PC-3 (cell line): ENCODE measurements at regions of chr17 and their contacts with region 1.

Region 1: GRCh38 chr17:44344939-44345453 is at the start of gene GRN:
- DNase-seq: peak; percentile 99
- ATAC-seq: peak; percentile 97
- H3K4me3 ChIP-seq: peak within 1 kb of the TSS; percentile 88
- H3K27ac ChIP-seq: peak within 1 kb of the TSS; percentile 20
- H3K4me1 ChIP-seq: peaks cover 4% of the 10 kb centered on the region; the same call in 1 of the 2 replicates
- H3K27me3 ChIP-seq: no peaks in the 10 kb centered on the region
- CTCF ChIP-seq: no peak
- total RNA-seq, gene GRN: 400 and 465 TPM in 2 replicates

Region 2: GRCh38 chr17:44293509-44294226 is 51.3 kb before region 1 on chr17:
- CTCF ChIA-PET with region 1: no interaction called
- POLR2A ChIA-PET with region 1: no interaction called
- intact Hi-C with region 1: no loop called
- DNase-seq: no peak
- ATAC-seq: no peak
- H3K4me3 ChIP-seq: no peak overlapping the region
- H3K27ac ChIP-seq: no peak overlapping the region
- H3K4me1 ChIP-seq: no peaks in the 10 kb centered on the region
- H3K27me3 ChIP-seq: no peaks in the 10 kb centered on the region
- CTCF ChIP-seq: no peak

Region 3: GRCh38 chr17:44308320-44308818 is 36.6 kb before region 1 on chr17 and contains the start of gene RUNDC3A:
- CTCF ChIA-PET with region 1: no interaction called
- POLR2A ChIA-PET with region 1: no interaction called
- intact Hi-C with region 1: loop called (anchors 2 kb)
- DNase-seq: peak; percentile 58
- ATAC-seq: peak; percentile 66
- H3K4me3 ChIP-seq: no peak within 1 kb of the TSS
- H3K27ac ChIP-seq: no peak within 1 kb of the TSS
- H3K4me1 ChIP-seq: peaks cover 9% of the 10 kb centered on the region
- H3K27me3 ChIP-seq: no peaks in the 10 kb centered on the region
- CTCF ChIP-seq: no peak
- total RNA-seq, gene RUNDC3A: 0.29 and 1.4 TPM in 2 replicates

Region 4: GRCh38 chr17:44331249-44331760 is 13.7 kb before region 1 on chr17:
- CTCF ChIA-PET with region 1: interaction called, 5 read pairs
- POLR2A ChIA-PET with region 1: no interaction called
- intact Hi-C with region 1: loop called (anchors 2 kb)
- DNase-seq: peak; percentile 97
- ATAC-seq: peak; percentile 53
- H3K4me3 ChIP-seq: no peak overlapping the region
- H3K27ac ChIP-seq: no peak overlapping the region
- H3K4me1 ChIP-seq: no peaks in the 10 kb centered on the region
- H3K27me3 ChIP-seq: no peaks in the 10 kb centered on the region
- CTCF ChIP-seq: peak; percentile 97

Region 5: GRCh38 chr17:44363613-44364159 is 18.7 kb after region 1 on chr17 and contains the start of gene FAM171A2:
- CTCF ChIA-PET with region 1: interaction called, 3 read pairs
- POLR2A ChIA-PET with region 1: no interaction called
- intact Hi-C with region 1: loop called (anchors 1 kb)
- DNase-seq: peak; percentile 76
- ATAC-seq: peak; percentile 90
- H3K4me3 ChIP-seq: peak within 1 kb of the TSS; percentile 87
- H3K27ac ChIP-seq: no peak within 1 kb of the TSS
- H3K4me1 ChIP-seq: no peaks in the 10 kb centered on the region; the same call in 1 of the 2 replicates
- H3K27me3 ChIP-seq: no peaks in the 10 kb centered on the region
- CTCF ChIP-seq: peak; percentile 62
- total RNA-seq, gene FAM171A2: 16.3 and 22.6 TPM in 2 replicates